Activated naive CD4-positive, alpha-beta T cell treated with anti-CD3 and anti-CD28 coated beads for 36 hours (primary cell): ENCODE measurements at regions of chr2 and their contacts with region 1.

Region 1: GRCh38 chr2:101770726-101771125 is 73.2 kb downstream of the MAP4K4 start:
- DNase-seq: peak; percentile 37
- H3K4me3 Mint-ChIP-seq: no peak overlapping the region
- H3K27ac Mint-ChIP-seq: no peak overlapping the region
- H3K4me1 Mint-ChIP-seq: peaks cover 86% of the 10 kb centered on the region
- H3K27me3 Mint-ChIP-seq: no peaks in the 10 kb centered on the region

Region 2: GRCh38 chr2:101558740-101559519 is 211.8 kb before region 1 on chr2:
- CTCF ChIA-PET with region 1: no interaction called
- intact Hi-C with region 1: no loop called
- DNase-seq: no peak
- H3K4me3 Mint-ChIP-seq: no peak overlapping the region
- H3K27ac Mint-ChIP-seq: no peak overlapping the region
- H3K4me1 Mint-ChIP-seq: peaks cover 30% of the 10 kb centered on the region
- H3K27me3 Mint-ChIP-seq: no peaks in the 10 kb centered on the region

Region 3: GRCh38 chr2:101745711-101746387 is 24.9 kb before region 1 on chr2:
- CTCF ChIA-PET with region 1: no interaction called
- intact Hi-C with region 1: loop called (anchors 2 kb)
- DNase-seq: no peak
- H3K4me3 Mint-ChIP-seq: peak overlapping the region; percentile 12
- H3K27ac Mint-ChIP-seq: peak overlapping the region; percentile 56
- H3K4me1 Mint-ChIP-seq: peaks cover 69% of the 10 kb centered on the region
- H3K27me3 Mint-ChIP-seq: no peaks in the 10 kb centered on the region

Region 4: GRCh38 chr2:101781326-101781725 is 10.6 kb after region 1 on chr2:
- CTCF ChIA-PET with region 1: interaction called, 12 read pairs
- intact Hi-C with region 1: loop called (anchors 1 kb)
- DNase-seq: no peak
- H3K4me3 Mint-ChIP-seq: peak overlapping the region; percentile 38
- H3K27ac Mint-ChIP-seq: peak overlapping the region; percentile 26
- H3K4me1 Mint-ChIP-seq: peaks cover 82% of the 10 kb centered on the region
- H3K27me3 Mint-ChIP-seq: no peaks in the 10 kb centered on the region

Region 5: GRCh38 chr2:101793277-101793969 is 22.7 kb after region 1 on chr2:
- CTCF ChIA-PET with region 1: interaction called, 8 read pairs
- intact Hi-C with region 1: loop called (anchors 2 kb)
- DNase-seq: no peak
- H3K4me3 Mint-ChIP-seq: no peak overlapping the region
- H3K27ac Mint-ChIP-seq: no peak overlapping the region
- H3K4me1 Mint-ChIP-seq: peaks cover 67% of the 10 kb centered on the region
- H3K27me3 Mint-ChIP-seq: no peaks in the 10 kb centered on the region